ENCODE measurements at regions of chr3 and their contacts with region 1.

Region 1: DNA sequence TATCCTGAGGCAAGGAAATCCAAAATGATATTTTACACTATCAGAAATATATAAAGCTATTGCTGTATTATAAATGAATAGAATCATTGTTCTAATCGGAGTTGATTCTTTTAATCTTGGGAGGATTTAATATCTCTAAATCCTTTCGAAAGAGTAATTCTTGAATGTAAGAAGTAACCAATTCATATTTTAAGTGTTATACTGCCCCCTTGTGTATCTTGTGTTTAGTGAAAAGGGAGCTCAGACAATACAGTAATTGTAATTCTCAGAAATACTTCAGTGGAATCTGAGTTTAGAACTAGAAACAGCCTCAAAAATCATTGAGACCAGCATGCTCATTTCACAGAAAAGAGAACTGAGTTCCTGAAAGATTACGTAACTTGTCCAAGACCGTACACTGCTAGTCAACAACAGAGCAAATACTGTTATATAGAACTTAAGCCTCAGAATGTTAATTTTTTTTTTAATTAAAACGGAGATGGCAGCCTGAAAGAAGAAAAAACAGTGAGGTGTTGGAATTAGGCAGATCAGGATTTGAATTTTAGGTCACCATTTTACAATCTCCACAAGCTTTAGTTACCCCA is 42.9 kb downstream of the PLCH1 start:
- DNase-seq: peak in 1 of 2 donors; percentile 9
- ATAC-seq: peak in 7 of 8 donors; percentile 48 to 83 (median 67)
- H3K4me3 ChIP-seq: no peak overlapping the region
- H3K27ac ChIP-seq: peak overlapping the region in 2 of 10 donors; percentile 13 to 24
- H3K4me1 ChIP-seq: peaks cover 0 to 4% (median 0%) of the 10 kb centered on the region in 9 donors
- H3K27me3 ChIP-seq: peaks cover 0 to 7% (median 0%) of the 10 kb centered on the region in 7 donors
- CTCF ChIP-seq: peak; percentile 44 to 82 (median 71)

Region 2: GRCh38 chr3:154334973-154335420 is 1367.0 kb before region 1 on chr3:
- intact Hi-C with region 1: loop called in 7 of 10 experiments (anchors 5 to 10 kb)
- DNase-seq: no peak
- ATAC-seq: no peak
- H3K4me3 ChIP-seq: no peak overlapping the region
- H3K27ac ChIP-seq: no peak overlapping the region
- H3K4me1 ChIP-seq: no peaks in the 10 kb centered on the region
- H3K27me3 ChIP-seq: peaks cover 0 to 2% (median 0%) of the 10 kb centered on the region in 7 donors
- CTCF ChIP-seq: peak; percentile 34 to 77 (median 69)

Region 3: DNA sequence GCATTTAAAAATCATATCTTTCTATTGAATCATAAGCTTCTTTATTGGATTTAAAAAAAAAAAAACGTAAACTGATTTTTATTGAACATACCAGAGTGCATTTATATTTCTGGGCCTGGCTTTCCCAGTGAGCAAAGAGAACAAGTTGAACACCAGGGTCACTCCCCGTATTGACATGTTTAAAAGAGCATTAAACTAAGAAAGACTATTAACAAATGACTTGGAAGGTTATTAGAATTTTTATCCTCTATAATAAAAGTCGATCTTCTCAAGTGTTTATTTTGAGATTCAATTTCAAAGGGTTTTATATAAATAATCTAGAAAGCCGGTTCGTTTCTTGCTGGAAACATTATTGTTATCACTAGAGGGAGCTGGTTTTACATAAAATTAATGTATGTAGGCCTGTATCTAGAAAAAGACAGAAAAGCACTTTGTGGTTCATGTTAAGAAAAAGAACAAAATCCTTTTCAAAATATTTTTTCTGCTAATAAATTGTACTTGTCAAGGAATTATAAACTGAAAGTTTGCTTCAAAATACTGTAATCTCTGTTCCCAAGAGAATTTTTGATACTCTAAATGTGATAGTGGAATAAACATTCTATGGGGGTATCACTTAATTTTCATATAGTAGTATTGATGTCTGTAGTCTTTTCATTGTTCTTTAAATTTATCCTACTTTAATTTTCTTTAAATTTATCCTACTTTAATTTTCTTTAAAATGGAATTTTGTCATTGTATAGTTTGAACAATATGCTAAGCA is 943.7 kb before region 1 on chr3:
- intact Hi-C with region 1: loop called in 1 of 10 experiments (anchors 5 kb)
- DNase-seq: no peak
- ATAC-seq: no peak
- H3K4me3 ChIP-seq: no peak overlapping the region
- H3K27ac ChIP-seq: no peak overlapping the region
- H3K4me1 ChIP-seq: no peaks in the 10 kb centered on the region
- H3K27me3 ChIP-seq: no peaks in the 10 kb centered on the region
- CTCF ChIP-seq: peak in 8 of 9 donors; percentile 31 to 71 (median 58)

Region 4: DNA sequence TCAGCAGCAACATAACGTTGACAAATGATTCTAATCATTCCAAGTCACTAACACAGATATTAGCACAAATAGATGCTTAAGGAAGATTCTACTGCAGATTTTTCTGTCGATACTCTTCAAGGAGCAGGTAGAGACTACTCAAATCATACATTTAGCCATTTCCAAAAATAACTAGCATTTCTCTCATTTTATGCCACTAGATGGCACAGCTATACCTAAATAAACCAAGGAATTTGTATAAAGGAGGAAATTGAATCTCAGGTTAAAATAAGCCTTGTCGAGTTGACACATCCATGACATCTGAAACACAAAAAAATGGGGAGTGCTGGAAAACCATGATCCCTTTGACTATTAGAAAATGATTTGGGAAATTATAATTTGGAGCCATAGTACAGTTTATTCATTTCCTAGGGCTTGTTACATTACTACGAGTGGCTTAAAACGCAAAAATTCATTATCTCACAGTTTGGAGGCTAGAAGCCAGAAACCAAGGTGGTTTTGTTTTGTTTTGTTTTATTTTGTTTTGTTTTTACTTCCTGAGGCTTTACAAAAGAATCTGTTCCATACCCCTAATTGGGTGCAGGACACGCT is 349.0 kb before region 1 on chr3:
- intact Hi-C with region 1: loop called (anchors 1 to 10 kb)
- DNase-seq: no peak
- ATAC-seq: peak in 2 of 8 donors; percentile 37 to 39
- H3K4me3 ChIP-seq: no peak overlapping the region
- H3K27ac ChIP-seq: no peak overlapping the region
- H3K4me1 ChIP-seq: peaks cover 0 to 4% (median 0%) of the 10 kb centered on the region in 9 donors
- H3K27me3 ChIP-seq: no peaks in the 10 kb centered on the region
- CTCF ChIP-seq: peak; percentile 26 to 68 (median 51)

Region 5: DNA sequence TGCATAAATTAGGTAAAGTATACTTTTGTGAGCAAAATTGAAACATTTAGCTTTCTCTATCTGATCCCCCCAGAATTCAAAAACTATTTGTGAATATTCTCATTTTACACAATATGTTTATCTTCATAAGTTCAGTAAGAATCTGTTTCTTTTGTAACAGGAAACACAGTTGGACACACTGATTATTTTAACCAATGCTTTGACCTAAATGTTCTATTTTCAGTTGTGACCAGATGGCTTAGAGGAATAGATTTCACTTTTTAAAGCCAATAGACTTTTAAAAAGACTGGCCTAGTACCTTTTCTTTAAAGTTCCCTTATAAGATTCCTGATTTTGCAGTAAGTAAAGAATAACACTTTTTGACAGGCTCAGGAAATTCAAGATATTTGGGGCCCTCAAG is 334.5 kb before region 1 on chr3:
- intact Hi-C with region 1: loop called in 1 of 10 experiments (anchors 5 kb)
- DNase-seq: no peak
- ATAC-seq: no peak
- H3K4me3 ChIP-seq: no peak overlapping the region
- H3K27ac ChIP-seq: peak overlapping the region in 6 of 10 donors; percentile 13 to 68 (median 37)
- H3K4me1 ChIP-seq: peaks cover 0 to 53% (median 18%) of the 10 kb centered on the region in 9 donors
- H3K27me3 ChIP-seq: no peaks in the 10 kb centered on the region
- CTCF ChIP-seq: no peak

Region 6: DNA sequence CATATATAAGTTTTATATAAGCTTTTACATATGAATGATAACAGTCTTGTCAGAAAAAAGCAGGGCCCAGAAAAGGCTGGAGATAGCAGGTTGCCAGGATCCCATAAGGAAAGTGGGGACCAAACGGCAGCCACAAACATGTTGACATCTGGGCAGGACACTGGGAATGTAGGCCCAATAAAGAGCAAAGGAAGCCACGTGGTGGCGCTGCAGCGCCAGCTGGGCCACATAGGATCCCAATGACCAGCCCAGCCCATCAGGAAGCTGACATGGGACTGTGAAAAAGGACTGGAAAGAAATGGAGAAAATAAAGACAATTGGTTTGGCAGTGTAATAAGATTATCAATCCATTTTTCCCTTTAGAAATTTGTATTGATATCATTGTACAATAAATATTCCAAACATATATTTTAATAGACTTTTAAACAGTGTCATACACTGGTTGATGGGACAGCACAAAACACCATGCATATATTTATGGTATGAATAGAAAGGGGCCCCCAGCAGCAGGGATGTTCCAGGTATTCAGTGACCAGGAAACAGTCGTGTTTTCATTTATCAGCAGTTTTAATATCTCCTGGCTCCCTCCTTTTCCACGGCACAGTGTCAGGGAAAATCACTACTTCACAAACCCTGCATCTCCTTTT is 319.5 kb before region 1 on chr3:
- intact Hi-C with region 1: loop called in 8 of 10 experiments (anchors 1 to 10 kb)
- DNase-seq: peak; percentile 68 to 77
- ATAC-seq: peak; percentile 74 to 93 (median 89)
- H3K4me3 ChIP-seq: no peak overlapping the region
- H3K27ac ChIP-seq: no peak overlapping the region
- H3K4me1 ChIP-seq: peaks cover 0 to 18% (median 3%) of the 10 kb centered on the region in 9 donors
- H3K27me3 ChIP-seq: no peaks in the 10 kb centered on the region
- CTCF ChIP-seq: peak; percentile 19 to 74 (median 64)

Region 7: DNA sequence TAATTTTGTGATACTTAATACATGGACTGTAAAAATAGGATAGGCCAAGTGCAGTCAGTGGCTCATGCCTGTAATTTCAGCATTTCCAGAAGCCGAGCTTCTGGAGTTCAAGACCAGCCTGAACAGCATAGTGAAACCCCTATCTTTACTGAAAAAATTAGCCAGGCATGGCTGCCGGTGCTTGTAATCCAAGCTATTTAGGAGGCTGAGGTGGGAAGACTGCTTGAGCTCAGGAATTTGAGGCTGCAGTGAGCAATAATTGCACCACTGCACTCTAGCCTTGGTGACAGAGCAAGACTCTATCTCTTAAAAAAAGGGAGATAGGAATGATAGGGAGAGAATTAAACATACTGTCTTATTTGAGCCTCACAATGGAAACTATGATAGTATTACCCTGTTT is 219.5 kb after region 1 on chr3:
- intact Hi-C with region 1: no loop called
- DNase-seq: no peak
- ATAC-seq: no peak
- H3K4me3 ChIP-seq: no peak overlapping the region
- H3K27ac ChIP-seq: no peak overlapping the region
- H3K4me1 ChIP-seq: no peaks in the 10 kb centered on the region
- H3K27me3 ChIP-seq: no peaks in the 10 kb centered on the region
- CTCF ChIP-seq: no peak